Astrocyte of the cerebellum (primary cell): ENCODE measurements at regions of chr2 and their contacts with region 1.

Region 1: GRCh38 chr2:240840435-240841080 is 20.5 kb upstream of the KIF1A start:
- DNase-seq: peak; percentile 20
- H3K4me3 ChIP-seq: no peak overlapping the region
- CTCF ChIP-seq: peak; percentile 67

Region 2: GRCh38 chr2:240913810-240914644 is 73.5 kb after region 1 on chr2:
- in situ Hi-C with region 1: no loop called
- DNase-seq: peak; percentile 63
- H3K4me3 ChIP-seq: no peak overlapping the region
- CTCF ChIP-seq: peak; percentile 95

Region 3: GRCh38 chr2:240946654-240947053 is 106.1 kb after region 1 on chr2:
- in situ Hi-C with region 1: loop called (anchors 10 kb)
- DNase-seq: no peak
- H3K4me3 ChIP-seq: no peak overlapping the region
- CTCF ChIP-seq: no peak

Region 4: DNA sequence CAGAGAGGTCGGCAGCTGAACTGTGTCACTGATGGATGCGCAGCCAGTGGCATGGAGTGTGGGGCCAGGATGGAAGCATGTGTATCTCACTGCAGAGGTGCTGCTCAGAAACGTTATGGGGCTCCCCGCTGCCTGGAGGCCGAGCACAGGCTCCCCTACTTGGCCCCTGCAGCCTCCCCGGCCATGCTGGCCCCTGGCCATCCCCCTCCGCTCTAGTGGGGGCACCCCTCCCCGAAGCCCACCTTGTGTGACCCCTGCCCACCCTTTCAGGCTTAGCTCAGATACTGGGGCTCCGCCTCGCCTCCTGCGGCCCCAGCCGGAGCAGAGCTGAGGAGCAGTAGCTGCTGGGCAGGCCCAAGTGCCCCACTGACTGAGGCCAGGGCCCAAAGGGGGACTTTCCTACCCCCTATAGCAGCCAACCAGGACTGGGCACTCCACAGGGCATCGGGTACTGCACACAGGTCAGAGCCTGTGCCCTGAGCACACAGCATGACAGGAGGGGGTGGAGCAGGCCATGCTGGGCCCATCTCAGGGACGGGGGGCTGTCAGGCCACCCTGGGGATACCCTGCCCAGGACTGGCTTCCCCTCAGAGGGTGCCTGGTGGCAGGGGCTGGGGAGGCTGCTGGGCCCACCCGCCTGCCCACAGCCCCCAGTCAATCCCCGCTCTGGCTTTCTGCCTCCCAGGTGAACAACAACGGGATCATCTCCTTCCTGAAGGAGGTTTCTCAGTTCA is 189.2 kb after region 1 on chr2:
- in situ Hi-C with region 1: loop called (anchors 10 kb)
- DNase-seq: no peak
- H3K4me3 ChIP-seq: no peak overlapping the region
- CTCF ChIP-seq: no peak